Ascending aorta (tissue), 2 donors: ENCODE measurements at regions of chr19 and their contacts with region 1.

Region 1: GRCh38 chr19:52993323-52994178 is 20.2 kb upstream of the ERVV-1 start:
- DNase-seq: peak; percentile 51 to 91
- H3K4me3 ChIP-seq: peak overlapping the region; percentile 61 to 71
- H3K27ac ChIP-seq: peak overlapping the region; percentile 79 to 81
- H3K4me1 ChIP-seq: peaks cover 8 to 10% of the 10 kb centered on the region in 2 donors
- H3K27me3 ChIP-seq: no peaks in the 10 kb centered on the region
- CTCF ChIP-seq: peak; percentile 38 to 77 (median 61)

Region 2: DNA sequence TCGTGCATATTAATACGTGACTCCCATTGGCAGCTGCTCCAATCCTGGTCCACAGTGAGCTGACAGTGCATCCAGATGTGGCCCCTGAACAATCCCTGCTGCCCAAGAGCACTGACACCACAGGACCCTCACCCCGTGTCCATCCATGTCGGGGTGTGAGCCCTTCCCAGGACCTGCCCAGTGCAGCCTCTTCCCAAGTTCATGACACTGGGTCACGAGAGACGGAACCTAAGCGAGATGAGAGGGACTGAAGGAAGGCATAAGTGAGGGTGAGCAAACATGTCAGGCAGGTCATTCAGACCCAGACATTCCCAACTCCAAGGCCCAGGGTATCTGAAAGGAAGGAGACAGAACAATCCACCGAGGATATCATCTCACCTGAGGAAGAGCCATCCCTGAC is 139.7 kb before region 1 on chr19:
- intact Hi-C with region 1: loop called (anchors 5 kb)
- DNase-seq: no peak
- H3K4me3 ChIP-seq: no peak overlapping the region
- H3K27ac ChIP-seq: no peak overlapping the region
- H3K4me1 ChIP-seq: peaks cover 0 to 3% of the 10 kb centered on the region in 2 donors
- H3K27me3 ChIP-seq: no peaks in the 10 kb centered on the region
- CTCF ChIP-seq: no peak

Region 3: GRCh38 chr19:52897144-52897935 is 96.2 kb before region 1 on chr19 and contains the start of gene ZNF320:
- intact Hi-C with region 1: loop called (anchors 1 kb)
- DNase-seq: peak; percentile 92 to 98
- H3K4me3 ChIP-seq: peak within 1 kb of the TSS; percentile 77 to 93
- H3K27ac ChIP-seq: peak within 1 kb of the TSS; percentile 92 to 94
- H3K4me1 ChIP-seq: peaks cover 5 to 10% of the 10 kb centered on the region in 2 donors
- H3K27me3 ChIP-seq: no peaks in the 10 kb centered on the region
- CTCF ChIP-seq: no peak
- total RNA-seq, gene ZNF320: not detected

Region 4: GRCh38 chr19:52922841-52923777 is 70.4 kb before region 1 on chr19 and contains the start of gene ZNF888:
- intact Hi-C with region 1: loop called (anchors 1 kb)
- DNase-seq: peak; percentile 70 to 96
- H3K4me3 ChIP-seq: peak within 1 kb of the TSS; percentile 79 to 83
- H3K27ac ChIP-seq: peak within 1 kb of the TSS; percentile 88 to 91
- H3K4me1 ChIP-seq: peaks cover 0 to 8% of the 10 kb centered on the region in 2 donors
- H3K27me3 ChIP-seq: no peaks in the 10 kb centered on the region
- CTCF ChIP-seq: no peak
- total RNA-seq, gene ZNF888: 0.43 TPM

Region 5: DNA sequence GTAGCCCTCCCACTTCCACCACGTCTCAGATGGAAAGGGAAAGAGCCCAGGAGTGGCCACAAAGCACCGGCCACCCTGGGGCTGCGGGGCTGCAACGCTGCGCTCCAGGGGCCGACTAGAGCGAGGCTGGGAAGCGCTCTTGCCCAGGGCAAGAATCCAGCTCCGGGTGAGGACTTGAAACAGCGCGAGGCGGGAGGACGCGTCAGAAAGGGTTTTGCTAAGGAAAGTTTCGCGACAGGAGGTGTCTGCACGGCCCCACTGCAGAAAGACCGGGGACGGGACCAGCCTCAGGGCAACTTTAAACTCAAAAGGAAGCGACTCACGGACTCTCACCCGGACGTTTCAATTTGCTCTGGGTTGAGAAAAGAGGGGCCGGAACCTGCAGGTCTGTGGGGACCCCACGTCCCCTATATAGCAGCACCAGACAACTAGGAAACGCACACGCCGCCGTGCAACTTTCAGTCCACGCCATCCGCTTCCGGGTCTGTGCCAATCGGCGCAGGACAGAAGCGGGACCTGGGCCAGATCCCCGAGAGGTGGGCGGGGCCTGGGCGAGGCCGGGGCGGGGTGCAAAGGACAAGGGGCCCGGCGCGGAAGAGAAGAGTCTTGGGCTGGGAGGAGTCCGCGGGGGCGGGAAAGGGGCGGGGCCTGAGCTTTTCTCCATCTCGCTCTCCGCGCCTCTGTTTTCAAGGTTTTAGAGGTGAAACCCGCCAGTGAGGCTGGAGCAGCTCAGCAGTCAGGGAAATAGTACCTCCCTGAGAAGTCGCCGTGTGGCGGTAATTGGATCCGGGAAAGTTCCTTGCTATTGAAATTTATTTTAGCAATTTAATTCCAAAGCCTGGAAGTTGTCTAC is 30.9 kb before region 1 on chr19 and contains the start of gene ZNF816:
- intact Hi-C with region 1: loop called (anchors 1 kb)
- DNase-seq: peak; percentile 92 to 99
- H3K4me3 ChIP-seq: peak within 1 kb of the TSS; percentile 71 to 74
- H3K27ac ChIP-seq: peak within 1 kb of the TSS; percentile 81 to 87
- H3K4me1 ChIP-seq: peaks cover 0 to 9% of the 10 kb centered on the region in 2 donors
- H3K27me3 ChIP-seq: no peaks in the 10 kb centered on the region
- CTCF ChIP-seq: no peak
- total RNA-seq, gene ZNF816: 7.1 TPM

Region 6: GRCh38 chr19:53076977-53077376 is 83.4 kb after region 1 on chr19:
- intact Hi-C with region 1: no loop called
- DNase-seq: no peak
- H3K4me3 ChIP-seq: no peak overlapping the region
- H3K27ac ChIP-seq: no peak overlapping the region
- H3K4me1 ChIP-seq: no peaks in the 10 kb centered on the region
- H3K27me3 ChIP-seq: no peaks in the 10 kb centered on the region
- CTCF ChIP-seq: peak in 2 of 3 experiments; percentile 27 to 39

Region 7: GRCh38 chr19:53158119-53158656 is 164.6 kb after region 1 on chr19:
- intact Hi-C with region 1: loop called (anchors 2 kb)
- DNase-seq: peak in 1 of 2 donors; percentile 65
- H3K4me3 ChIP-seq: peak overlapping the region; percentile 78 to 86
- H3K27ac ChIP-seq: peak overlapping the region; percentile 78 to 82
- H3K4me1 ChIP-seq: no peaks in the 10 kb centered on the region
- H3K27me3 ChIP-seq: no peaks in the 10 kb centered on the region
- CTCF ChIP-seq: no peak